Activated CD4-positive, alpha-beta T cell treated with anti-CD3 and anti-CD28 coated beads for 36 hours (primary cell): ENCODE measurements at regions of chr1 and their contacts with region 1.

Region 1: DNA sequence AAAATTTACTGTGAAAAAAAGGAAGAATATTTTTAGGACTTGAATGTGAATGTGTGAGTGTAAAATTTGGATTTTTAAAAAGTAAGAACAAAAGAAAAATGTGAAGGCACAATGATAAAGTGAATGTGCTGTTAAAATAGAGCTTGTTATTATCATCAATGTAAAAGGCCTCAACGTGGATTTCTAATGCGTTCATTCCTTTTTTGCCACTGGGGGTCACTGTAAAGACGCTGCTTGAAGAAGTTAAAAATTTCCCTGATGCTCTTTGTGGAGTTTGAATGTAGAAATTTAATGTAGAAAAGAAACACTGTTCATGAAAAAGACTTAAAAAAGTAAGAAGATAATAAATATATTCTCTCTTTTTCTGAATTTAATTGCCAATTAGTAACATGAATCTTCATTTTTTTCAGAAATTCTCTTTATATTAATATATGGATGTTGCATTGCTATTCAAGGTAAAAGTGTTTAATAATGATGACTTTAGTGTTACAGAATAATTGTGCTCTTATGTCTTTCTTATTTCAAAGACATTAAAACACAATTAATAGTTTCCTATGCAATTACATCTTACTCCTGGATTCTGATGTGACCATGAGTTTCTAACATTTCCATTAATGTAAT is 161.5 kb downstream of the DNM3 start:
- DNase-seq: peak; percentile 33
- ATAC-seq: no peak
- H3K4me3 Mint-ChIP-seq: no peak overlapping the region
- H3K27ac Mint-ChIP-seq: no peak overlapping the region
- H3K4me1 Mint-ChIP-seq: no peaks in the 10 kb centered on the region
- H3K27me3 Mint-ChIP-seq: no peaks in the 10 kb centered on the region

Region 2: DNA sequence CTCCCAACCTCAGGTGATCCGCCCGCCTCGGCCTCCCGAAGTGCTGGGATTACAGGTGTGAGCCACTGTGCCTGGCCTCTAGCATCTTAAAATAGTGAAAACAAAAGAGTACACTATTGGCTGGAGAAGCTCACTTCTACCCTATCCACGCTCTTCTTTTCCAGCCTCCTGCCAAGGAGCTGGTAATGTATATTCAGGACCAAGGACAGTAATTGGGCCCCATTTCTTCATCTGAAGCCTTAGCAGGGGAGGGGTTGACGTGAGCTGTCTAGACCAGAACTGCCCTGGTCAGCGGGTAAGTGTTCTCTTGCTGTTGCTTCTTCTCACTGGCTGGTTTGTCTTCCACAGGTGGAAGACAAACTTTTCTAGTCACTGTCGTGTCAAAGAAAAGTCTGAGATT is 91.3 kb before region 1 on chr1:
- CTCF ChIA-PET with region 1: no interaction called
- POLR2A ChIA-PET with region 1: no interaction called
- intact Hi-C with region 1: no loop called
- DNase-seq: no peak
- ATAC-seq: no peak
- H3K4me3 Mint-ChIP-seq: no peak overlapping the region
- H3K27ac Mint-ChIP-seq: no peak overlapping the region
- H3K4me1 Mint-ChIP-seq: peaks cover 1% of the 10 kb centered on the region
- H3K27me3 Mint-ChIP-seq: peaks cover 2% of the 10 kb centered on the region

Region 3: DNA sequence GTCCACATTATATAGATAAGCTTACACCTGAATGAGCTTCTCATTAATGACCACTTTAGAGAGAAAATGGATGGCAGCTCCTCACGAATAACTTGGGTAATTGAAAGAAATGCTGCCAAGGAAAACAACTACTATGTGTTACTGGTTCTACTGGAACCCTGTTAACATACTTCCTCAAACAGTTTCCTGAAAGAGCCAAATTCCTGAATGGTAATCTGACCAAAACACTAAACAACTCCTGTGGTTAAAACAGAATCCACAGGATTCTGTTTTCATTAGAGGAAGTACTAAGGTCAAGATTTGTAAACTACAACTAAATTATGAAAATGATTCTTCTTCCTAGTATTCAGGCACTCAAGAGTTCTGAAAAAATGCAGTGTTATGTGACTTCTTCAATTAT is 54.3 kb before region 1 on chr1:
- CTCF ChIA-PET with region 1: no interaction called
- POLR2A ChIA-PET with region 1: no interaction called
- intact Hi-C with region 1: loop called in 1 of 2 experiments (anchors 10 kb)
- DNase-seq: no peak
- ATAC-seq: no peak
- H3K4me3 Mint-ChIP-seq: no peak overlapping the region
- H3K27ac Mint-ChIP-seq: no peak overlapping the region
- H3K4me1 Mint-ChIP-seq: no peaks in the 10 kb centered on the region
- H3K27me3 Mint-ChIP-seq: no peaks in the 10 kb centered on the region

Region 4: GRCh38 chr1:172089768-172090510 is 87.1 kb after region 1 on chr1:
- CTCF ChIA-PET with region 1: interaction called, 3 read pairs
- POLR2A ChIA-PET with region 1: no interaction called
- intact Hi-C with region 1: loop called in 1 of 2 experiments (anchors 2 kb)
- DNase-seq: peak; percentile 83
- ATAC-seq: peak; percentile 93
- H3K4me3 Mint-ChIP-seq: no peak overlapping the region
- H3K27ac Mint-ChIP-seq: no peak overlapping the region
- H3K4me1 Mint-ChIP-seq: peaks cover 2% of the 10 kb centered on the region
- H3K27me3 Mint-ChIP-seq: no peaks in the 10 kb centered on the region

Region 5: GRCh38 chr1:172443626-172444453 is 441.0 kb after region 1 on chr1 and contains the start of gene PIGC:
- CTCF ChIA-PET with region 1: interaction called, 6 read pairs
- POLR2A ChIA-PET with region 1: interaction called, 3 read pairs
- intact Hi-C with region 1: loop called (anchors 1 to 5 kb)
- DNase-seq: peak; percentile 97
- ATAC-seq: peak; percentile 99
- H3K4me3 Mint-ChIP-seq: peak within 1 kb of the TSS; percentile 85
- H3K27ac Mint-ChIP-seq: peak within 1 kb of the TSS; percentile 91
- H3K4me1 Mint-ChIP-seq: peaks cover 31% of the 10 kb centered on the region
- H3K27me3 Mint-ChIP-seq: no peaks in the 10 kb centered on the region
- total RNA-seq, gene PIGC: 14.7 to 17.1 TPM

Region 6: DNA sequence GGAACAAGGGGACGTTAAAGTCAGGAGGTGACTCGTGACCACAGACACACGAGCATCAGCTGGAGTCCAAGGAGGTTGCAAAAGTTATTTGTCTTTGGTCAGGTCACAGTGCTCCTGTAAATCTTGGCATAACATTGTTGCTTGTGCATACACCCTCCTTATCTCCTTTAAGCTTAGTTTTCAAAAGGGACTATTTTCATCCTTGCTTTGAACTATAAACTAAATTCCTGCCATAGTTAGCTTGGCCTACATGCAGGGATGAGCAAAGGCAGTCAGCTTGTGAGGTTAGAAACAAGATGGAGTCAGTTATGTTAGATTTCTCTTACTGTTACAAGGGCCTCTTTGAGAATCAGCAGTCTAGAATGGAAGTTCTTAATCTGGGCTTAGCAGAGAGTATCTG is 628.0 kb after region 1 on chr1:
- CTCF ChIA-PET with region 1: no interaction called
- POLR2A ChIA-PET with region 1: no interaction called
- intact Hi-C with region 1: no loop called
- DNase-seq: no peak
- ATAC-seq: no peak
- H3K4me3 Mint-ChIP-seq: no peak overlapping the region
- H3K27ac Mint-ChIP-seq: no peak overlapping the region
- H3K4me1 Mint-ChIP-seq: peaks cover 44% of the 10 kb centered on the region
- H3K27me3 Mint-ChIP-seq: peaks cover 8% of the 10 kb centered on the region